ENCODE measurements at regions of chr1 and their contacts with region 1.

Region 1: DNA sequence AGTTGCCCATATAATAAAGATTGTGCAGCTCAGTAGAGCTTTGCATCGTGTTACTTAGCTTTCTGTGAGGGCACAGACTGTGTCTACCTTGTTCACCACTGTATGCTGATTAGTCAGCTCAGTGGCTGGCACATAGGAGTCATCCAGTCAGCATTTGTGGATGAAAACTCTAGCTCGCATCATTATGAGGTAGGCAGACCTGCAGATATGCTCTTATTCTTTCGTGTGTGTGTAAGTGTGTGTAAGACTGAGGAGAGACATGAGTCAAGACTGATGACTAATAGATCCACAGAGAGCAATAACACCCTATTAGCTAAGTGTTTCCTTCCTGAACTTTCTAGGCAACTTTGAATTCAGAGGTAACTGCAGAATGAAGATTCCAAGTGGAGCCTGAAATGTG is 17.1 kb downstream of the TTF2 start:
- DNase-seq: peak; percentile 96
- ATAC-seq: peak; percentile 92
- H3K4me3 ChIP-seq: no peak overlapping the region
- H3K27ac ChIP-seq: no peak overlapping the region
- H3K4me1 ChIP-seq: peaks cover 3% of the 10 kb centered on the region
- H3K27me3 ChIP-seq: no peaks in the 10 kb centered on the region
- CTCF ChIP-seq: no peak
- POLR2A ChIP-seq: no peak
- RAD21 ChIP-seq: no peak

Region 2: DNA sequence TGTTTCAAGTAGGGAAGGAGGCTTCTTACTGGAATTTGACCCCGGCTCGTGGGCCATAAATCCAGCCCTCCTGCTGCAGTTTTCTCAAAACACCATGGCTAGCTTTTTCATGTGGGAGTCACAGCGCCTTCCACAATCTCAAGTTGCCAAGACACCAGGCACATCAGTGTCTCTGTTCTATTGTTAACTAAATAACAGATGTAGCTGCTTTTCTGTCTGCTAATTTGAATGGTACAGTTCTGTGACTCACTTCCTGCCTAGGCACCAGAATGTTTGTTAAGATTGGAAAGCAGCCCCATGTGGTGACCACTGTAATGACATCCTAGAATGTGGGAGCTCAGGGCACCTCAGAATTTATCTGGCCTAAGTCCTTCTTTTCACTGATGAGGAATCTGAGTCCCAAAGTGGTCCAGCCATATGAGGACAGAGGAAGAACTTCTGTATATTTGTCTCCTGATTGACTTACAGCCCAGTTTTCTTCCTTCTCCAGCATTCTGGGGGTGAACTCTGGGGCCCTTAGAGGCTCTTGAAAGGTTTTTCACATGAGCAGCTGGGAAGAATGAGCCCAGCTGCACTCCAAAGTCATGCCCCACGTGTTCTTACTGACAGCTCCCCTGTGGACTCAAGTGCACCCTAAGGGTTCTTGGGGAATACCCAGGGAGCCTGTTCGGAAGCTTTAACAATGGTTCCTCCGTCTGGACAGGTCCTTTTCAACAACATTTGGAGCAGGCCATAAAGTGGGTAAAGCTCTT is 16.8 kb after region 1 on chr1:
- CTCF ChIA-PET with region 1: interaction called, 11 read pairs
- POLR2A ChIA-PET with region 1: no interaction called
- dilution Hi-C with region 1: no loop called
- in situ Hi-C with region 1: no loop called
- intact Hi-C with region 1: no loop called
- DNase-seq: peak; percentile 75
- ATAC-seq: peak; percentile 8
- H3K4me3 ChIP-seq: no peak overlapping the region
- H3K27ac ChIP-seq: peak overlapping the region; percentile 67
- H3K4me1 ChIP-seq: peaks cover 24% of the 10 kb centered on the region
- H3K27me3 ChIP-seq: no peaks in the 10 kb centered on the region
- CTCF ChIP-seq: peak; percentile 47
- POLR2A ChIP-seq: no peak
- RAD21 ChIP-seq: peak; percentile 28; the same call in 1 of the 2 replicates

Region 3: GRCh38 chr1:117121776-117122697 is 44.8 kb after region 1 on chr1:
- CTCF ChIA-PET with region 1: interaction called, 3 read pairs
- POLR2A ChIA-PET with region 1: no interaction called
- dilution Hi-C with region 1: no loop called
- in situ Hi-C with region 1: loop called (anchors 10 kb)
- intact Hi-C with region 1: no loop called
- DNase-seq: peak; percentile 96
- ATAC-seq: peak; percentile 98
- H3K4me3 ChIP-seq: peak overlapping the region; percentile 68
- H3K27ac ChIP-seq: peak overlapping the region; percentile 95
- H3K4me1 ChIP-seq: peaks cover 8% of the 10 kb centered on the region; the same call in 1 of the 2 replicates
- H3K27me3 ChIP-seq: peaks cover 3% of the 10 kb centered on the region
- CTCF ChIP-seq: peak; percentile 88
- POLR2A ChIP-seq: peak; percentile 70
- RAD21 ChIP-seq: peak; percentile 61

Measured in IMR-90 (cell line).